Sigmoid colon (tissue), 7 donors: ENCODE measurements at regions of chr11 and their contacts with region 1.

Region 1: DNA sequence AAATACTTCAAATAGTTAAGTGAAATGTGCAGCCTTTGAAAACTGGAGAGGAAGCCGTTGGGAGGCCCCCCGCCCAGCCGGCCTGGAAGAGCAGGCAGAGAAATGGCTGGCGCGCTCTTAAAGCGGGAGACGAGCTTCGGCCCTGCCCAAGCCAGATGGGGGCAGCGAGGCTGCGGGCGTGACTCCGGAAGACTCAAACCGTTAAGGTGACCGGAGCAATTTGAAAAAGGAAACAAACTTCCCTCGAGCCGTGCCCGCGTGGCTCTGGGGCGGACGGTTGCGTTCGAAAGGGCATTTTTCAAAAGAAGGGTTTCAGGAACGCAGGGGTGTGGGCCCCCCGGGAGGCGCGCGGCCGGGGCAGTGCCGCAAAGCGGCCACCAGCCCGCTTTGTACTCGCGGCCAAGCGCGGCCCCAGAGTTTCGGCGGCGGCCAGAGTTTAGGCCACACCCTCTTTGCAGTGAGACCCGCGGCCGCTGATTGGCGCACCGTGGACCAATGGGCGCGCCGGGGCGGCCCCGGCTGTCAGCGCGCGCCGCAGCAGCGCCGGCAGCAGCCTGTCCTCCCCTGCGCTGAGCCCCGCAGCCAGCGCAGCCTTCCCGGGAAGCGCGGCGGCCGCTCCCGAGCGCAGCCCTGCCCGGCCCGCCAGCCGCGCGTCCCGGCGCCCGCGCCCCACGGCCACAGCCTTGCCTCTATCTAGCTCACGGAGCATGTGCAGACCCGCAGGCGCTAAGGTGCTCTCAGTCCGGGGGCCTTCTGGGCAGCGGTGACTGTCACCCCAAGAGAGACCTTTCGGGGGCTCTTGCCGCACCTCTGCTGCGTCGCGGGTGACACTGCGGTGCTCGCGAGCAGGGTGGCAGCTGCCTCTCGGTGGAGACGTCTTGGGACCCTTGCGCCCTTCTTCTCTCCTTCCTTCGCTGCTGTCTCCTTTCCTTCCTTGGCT is at the start of gene NAV2:
- DNase-seq: peak; percentile 97
- H3K4me3 ChIP-seq: peak within 1 kb of the TSS; percentile 62 to 85 (median 72)
- H3K27ac ChIP-seq: peak within 1 kb of the TSS; percentile 93 to 98 (median 96)
- H3K4me1 ChIP-seq: peaks cover 0 to 61% (median 54%) of the 10 kb centered on the region in 4 donors
- H3K27me3 ChIP-seq: no peaks in the 10 kb centered on the region
- CTCF ChIP-seq: no peak
- EP300 ChIP-seq: peak in 1 of 4 donors; percentile 42
- POLR2A ChIP-seq: peak; percentile 89 to 95
- total RNA-seq, gene NAV2: 22.1 to 62.6 (median 38.2) TPM

Region 2: GRCh38 chr11:19615341-19616183 is 97.0 kb before region 1 on chr11:
- intact Hi-C with region 1: loop called (anchors 1 kb)
- DNase-seq: no peak
- H3K4me3 ChIP-seq: no peak overlapping the region
- H3K27ac ChIP-seq: peak overlapping the region; percentile 65 to 82 (median 80)
- H3K4me1 ChIP-seq: peaks cover 0 to 30% (median 24%) of the 10 kb centered on the region in 4 donors
- H3K27me3 ChIP-seq: no peaks in the 10 kb centered on the region
- CTCF ChIP-seq: no peak
- EP300 ChIP-seq: no peak
- POLR2A ChIP-seq: no peak

Region 3: DNA sequence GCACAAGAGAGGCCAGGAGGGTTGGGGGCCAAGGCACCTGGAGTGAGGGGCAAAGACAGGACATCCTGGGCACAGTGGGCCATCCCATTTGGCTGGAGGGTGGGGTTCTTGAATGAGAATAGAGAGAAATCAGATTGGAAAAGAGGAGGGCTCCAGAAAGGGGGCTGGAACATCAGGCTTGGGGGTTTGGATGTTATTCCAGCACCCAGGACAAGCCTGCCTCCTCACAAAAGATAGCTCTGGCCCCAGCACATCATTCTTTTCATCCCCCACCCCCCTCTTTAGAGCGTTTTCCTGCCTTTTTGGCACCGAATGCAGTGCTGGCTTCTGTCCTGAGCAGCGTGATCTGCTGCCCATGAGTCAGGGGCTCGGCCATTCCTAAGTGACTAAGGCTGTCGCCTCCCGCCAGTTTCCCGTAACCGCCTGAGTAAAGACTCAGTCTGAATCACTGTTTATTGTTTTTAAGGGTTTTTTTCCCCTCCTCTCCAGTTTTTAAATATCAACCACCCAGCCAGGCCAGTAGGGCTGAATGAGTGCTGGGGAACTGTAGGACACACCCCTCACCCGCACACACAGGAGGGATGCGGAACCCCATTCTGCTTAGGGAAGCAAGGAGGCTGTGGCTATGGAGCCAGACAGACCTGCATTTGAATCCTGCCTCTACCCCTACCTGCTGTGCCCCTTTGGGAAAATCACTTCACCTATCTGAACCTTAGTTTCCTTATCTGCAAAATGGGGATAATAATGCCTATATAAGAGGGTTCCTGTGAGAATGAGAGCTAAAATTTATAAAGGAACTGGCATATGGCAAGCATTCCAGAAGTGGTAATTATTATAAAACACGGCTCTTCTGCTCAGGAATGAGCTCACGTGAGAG is 32.4 kb before region 1 on chr11:
- intact Hi-C with region 1: loop called (anchors 2 kb)
- DNase-seq: peak; percentile 96
- H3K4me3 ChIP-seq: peak overlapping the region in 1 of 4 donors; percentile 5
- H3K27ac ChIP-seq: peak overlapping the region; percentile 85 to 93 (median 88)
- H3K4me1 ChIP-seq: peaks cover 0 to 96% (median 86%) of the 10 kb centered on the region in 4 donors
- H3K27me3 ChIP-seq: no peaks in the 10 kb centered on the region
- CTCF ChIP-seq: no peak
- EP300 ChIP-seq: peak in 3 of 4 donors; percentile 4 to 94 (median 85)
- POLR2A ChIP-seq: no peak